ENCODE measurements at regions of chr13 and their contacts with region 1.

Region 1: GRCh38 chr13:35659796-35660195 is 183.3 kb upstream of the MAB21L1 start:
- DNase-seq: no peak
- ATAC-seq: no peak
- H3K4me3 Mint-ChIP-seq: no peak overlapping the region
- H3K27ac Mint-ChIP-seq: no peak overlapping the region
- H3K4me1 Mint-ChIP-seq: no peaks in the 10 kb centered on the region
- H3K27me3 Mint-ChIP-seq: no peaks in the 10 kb centered on the region

Region 2: GRCh38 chr13:33904431-33904830 is 1755.4 kb before region 1 on chr13:
- CTCF ChIA-PET with region 1: no interaction called
- POLR2A ChIA-PET with region 1: interaction called, 11 read pairs
- intact Hi-C with region 1: no loop called
- DNase-seq: no peak
- ATAC-seq: no peak
- H3K4me3 Mint-ChIP-seq: no peak overlapping the region
- H3K27ac Mint-ChIP-seq: no peak overlapping the region
- H3K4me1 Mint-ChIP-seq: no peaks in the 10 kb centered on the region
- H3K27me3 Mint-ChIP-seq: no peaks in the 10 kb centered on the region

Region 3: GRCh38 chr13:35157143-35157755 is 502.5 kb before region 1 on chr13:
- CTCF ChIA-PET with region 1: no interaction called
- POLR2A ChIA-PET with region 1: no interaction called
- intact Hi-C with region 1: no loop called
- DNase-seq: peak; percentile 47
- ATAC-seq: peak; percentile 39
- H3K4me3 Mint-ChIP-seq: no peak overlapping the region
- H3K27ac Mint-ChIP-seq: no peak overlapping the region
- H3K4me1 Mint-ChIP-seq: peaks cover 2% of the 10 kb centered on the region
- H3K27me3 Mint-ChIP-seq: no peaks in the 10 kb centered on the region

Region 4: GRCh38 chr13:35621989-35622388 is 37.8 kb before region 1 on chr13:
- CTCF ChIA-PET with region 1: no interaction called
- POLR2A ChIA-PET with region 1: no interaction called
- intact Hi-C with region 1: no loop called
- DNase-seq: no peak
- ATAC-seq: peak; percentile 26
- H3K4me3 Mint-ChIP-seq: no peak overlapping the region
- H3K27ac Mint-ChIP-seq: no peak overlapping the region
- H3K4me1 Mint-ChIP-seq: peaks cover 3% of the 10 kb centered on the region
- H3K27me3 Mint-ChIP-seq: no peaks in the 10 kb centered on the region

Measured in activated CD4-positive, alpha-beta T cell treated with anti-CD3 and anti-CD28 coated beads for 36 hours (primary cell).